ENCODE measurements at regions of chr12 and their contacts with region 1.

Region 1: GRCh38 chr12:117236456-117237001 is 46.3 kb upstream of the FBXO21 start:
- DNase-seq: peak; percentile 71 to 80
- ATAC-seq: peak in 5 of 8 donors; percentile 38 to 72 (median 57)
- H3K4me3 ChIP-seq: no peak overlapping the region
- H3K27ac ChIP-seq: no peak overlapping the region
- H3K4me1 ChIP-seq: no peaks in the 10 kb centered on the region
- H3K27me3 ChIP-seq: peaks cover 0 to 54% (median 31%) of the 10 kb centered on the region in 7 donors
- CTCF ChIP-seq: peak; percentile 70 to 84 (median 76)

Region 2: DNA sequence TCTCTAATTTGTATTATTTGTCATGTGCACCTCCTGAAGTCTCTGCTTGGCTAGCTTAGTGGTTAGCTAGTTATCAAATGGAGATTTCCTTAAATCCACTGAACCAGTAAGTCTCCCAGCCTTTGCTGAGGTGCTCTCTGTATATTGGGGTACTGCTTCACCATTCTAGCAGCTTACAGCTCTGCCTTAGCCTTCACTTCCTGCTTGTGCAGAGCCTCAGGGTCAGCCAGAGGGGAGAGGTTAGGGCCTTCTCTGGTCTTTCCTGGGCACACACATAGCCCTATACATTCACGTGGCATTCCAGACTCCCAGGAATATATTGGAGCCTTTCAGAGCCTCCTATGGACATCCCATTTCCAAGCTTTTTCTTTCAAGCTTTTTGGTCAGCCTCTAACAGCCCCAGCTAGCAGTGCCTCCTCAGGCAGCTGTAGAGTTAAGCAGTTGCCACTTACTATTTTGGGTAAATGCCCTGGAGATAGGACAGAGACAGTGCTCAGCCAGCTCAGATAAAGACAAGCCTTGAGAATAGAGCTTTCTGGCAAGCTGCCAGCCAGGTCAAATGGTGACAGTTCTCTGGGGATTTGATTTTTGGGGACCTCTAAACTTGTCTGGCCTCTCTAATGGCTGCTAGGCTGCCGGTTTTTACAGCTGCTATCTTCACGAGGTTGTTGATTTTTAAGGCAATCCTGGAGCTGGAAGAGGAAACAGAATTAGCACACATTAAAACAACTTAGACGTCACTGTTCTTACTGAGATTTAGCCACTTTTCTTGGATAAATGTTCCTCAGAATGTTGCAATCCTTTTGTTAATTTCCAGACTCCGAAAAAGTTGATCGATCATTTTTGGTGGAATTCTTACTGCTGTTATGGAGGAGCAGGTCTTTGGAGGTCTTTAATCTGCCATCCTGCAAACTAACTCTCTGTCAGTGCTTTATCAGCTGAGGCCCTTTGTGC is 292.8 kb before region 1 on chr12:
- intact Hi-C with region 1: no loop called
- DNase-seq: peak; percentile 32 to 35
- ATAC-seq: peak in 5 of 8 donors; percentile 22 to 71 (median 40)
- H3K4me3 ChIP-seq: no peak overlapping the region
- H3K27ac ChIP-seq: no peak overlapping the region
- H3K4me1 ChIP-seq: peaks cover 0 to 36% (median 16%) of the 10 kb centered on the region in 9 donors
- H3K27me3 ChIP-seq: no peaks in the 10 kb centered on the region
- CTCF ChIP-seq: no peak

Region 3: DNA sequence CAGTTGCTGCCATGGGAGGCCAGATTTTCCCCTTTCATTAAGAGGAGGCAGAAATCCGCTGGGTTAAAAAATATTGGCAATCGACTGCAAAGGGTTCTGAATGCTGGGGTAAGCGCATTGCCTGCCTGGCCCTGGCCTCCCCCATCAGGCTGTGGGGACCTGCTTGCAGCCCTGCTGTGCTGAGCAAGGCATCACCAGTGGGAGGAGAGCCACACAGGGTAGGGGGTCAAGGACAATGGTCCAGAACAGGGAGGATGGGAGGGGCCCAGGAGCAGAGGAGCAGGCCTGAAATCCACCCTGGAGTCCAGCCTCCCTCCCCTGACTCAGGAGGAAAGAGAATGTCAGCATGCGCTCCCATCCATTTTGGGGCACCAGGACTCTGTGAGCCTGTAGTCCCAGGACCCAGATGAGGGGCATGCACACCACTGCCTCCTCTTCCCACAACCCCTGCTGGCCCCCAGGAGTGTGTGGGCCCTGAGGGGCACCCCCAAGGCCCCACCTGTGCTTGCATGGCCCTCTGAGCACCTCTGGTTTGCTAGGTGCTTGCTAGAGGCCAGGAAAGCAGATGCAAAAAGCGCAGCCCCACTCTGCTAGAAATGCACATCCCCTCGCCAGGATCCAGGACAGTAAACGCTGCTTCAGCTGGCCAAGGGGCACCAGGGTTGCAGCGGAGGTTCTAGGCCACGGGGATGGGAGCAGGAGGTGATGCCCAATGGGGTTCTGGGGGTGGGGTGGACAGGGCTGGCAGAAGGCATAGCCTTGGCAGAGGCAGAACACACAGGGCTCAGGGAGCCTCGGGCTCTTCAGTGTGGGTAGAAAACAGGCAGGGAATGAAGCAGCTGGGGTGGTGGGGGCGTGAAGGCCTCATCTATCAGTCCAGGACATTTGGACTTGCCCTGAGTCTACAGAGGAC is 151.9 kb before region 1 on chr12:
- intact Hi-C with region 1: no loop called
- DNase-seq: no peak
- ATAC-seq: peak in 7 of 8 donors; percentile 11 to 53 (median 30)
- H3K4me3 ChIP-seq: no peak overlapping the region
- H3K27ac ChIP-seq: peak overlapping the region in 8 of 10 donors; percentile 25 to 75 (median 66)
- H3K4me1 ChIP-seq: peaks cover 0 to 60% (median 18%) of the 10 kb centered on the region in 9 donors
- H3K27me3 ChIP-seq: no peaks in the 10 kb centered on the region
- CTCF ChIP-seq: no peak

Region 4: GRCh38 chr12:117356048-117356447 is 119.5 kb after region 1 on chr12:
- intact Hi-C with region 1: loop called in 3 of 10 experiments (anchors 5 to 10 kb)
- DNase-seq: no peak
- ATAC-seq: no peak
- H3K4me3 ChIP-seq: no peak overlapping the region
- H3K27ac ChIP-seq: no peak overlapping the region
- H3K4me1 ChIP-seq: peaks cover 0 to 7% (median 0%) of the 10 kb centered on the region in 9 donors
- H3K27me3 ChIP-seq: peaks cover 7 to 70% (median 49%) of the 10 kb centered on the region in 7 donors
- CTCF ChIP-seq: no peak

Region 5: DNA sequence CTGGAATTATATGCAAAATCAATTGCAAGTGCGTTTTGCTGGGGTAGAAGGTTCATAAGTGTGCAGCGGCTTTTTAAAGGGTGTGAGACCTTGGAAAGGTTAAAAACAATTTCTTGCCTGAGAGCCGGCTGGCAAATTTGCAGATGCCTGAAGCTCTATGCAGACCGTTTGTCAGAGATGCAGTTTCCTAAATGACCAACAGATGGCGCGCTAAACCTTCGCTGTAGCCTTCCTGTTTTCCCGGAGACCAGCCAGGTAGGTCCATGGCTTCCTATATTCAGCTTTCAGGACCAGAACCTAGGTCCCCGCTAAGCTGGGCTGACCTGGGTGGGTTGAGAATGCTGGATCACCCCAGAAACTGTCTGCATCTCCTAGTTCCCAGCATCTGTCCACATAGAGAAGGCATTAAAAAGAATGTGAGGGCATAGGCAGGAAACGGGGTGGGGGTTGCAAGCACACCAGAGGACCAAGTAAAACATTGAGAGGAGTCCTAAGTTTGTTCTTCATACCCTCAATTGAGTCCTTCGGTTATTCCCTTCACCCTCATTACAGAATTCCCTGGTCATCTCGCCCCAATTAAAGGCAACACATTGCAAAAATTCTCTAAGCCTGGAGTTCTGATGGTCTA is 130.6 kb after region 1 on chr12:
- intact Hi-C with region 1: loop called in 4 of 10 experiments (anchors 2 to 10 kb)
- DNase-seq: peak in 1 of 2 donors; percentile 66
- ATAC-seq: peak in 6 of 8 donors; percentile 36 to 73 (median 55)
- H3K4me3 ChIP-seq: no peak overlapping the region
- H3K27ac ChIP-seq: no peak overlapping the region
- H3K4me1 ChIP-seq: no peaks in the 10 kb centered on the region
- H3K27me3 ChIP-seq: peaks cover 0 to 58% (median 42%) of the 10 kb centered on the region in 7 donors
- CTCF ChIP-seq: peak; percentile 77 to 93 (median 87)

Region 6: GRCh38 chr12:117580718-117581062 is 344.2 kb after region 1 on chr12:
- intact Hi-C with region 1: loop called in 7 of 10 experiments (anchors 5 to 10 kb)
- DNase-seq: peak; percentile 11 to 50
- ATAC-seq: peak; percentile 38 to 82 (median 70)
- H3K4me3 ChIP-seq: no peak overlapping the region
- H3K27ac ChIP-seq: no peak overlapping the region
- H3K4me1 ChIP-seq: peaks cover 0 to 9% (median 0%) of the 10 kb centered on the region in 9 donors
- H3K27me3 ChIP-seq: peaks cover 0 to 37% (median 27%) of the 10 kb centered on the region in 7 donors
- CTCF ChIP-seq: no peak

Region 7: GRCh38 chr12:117587631-117588287 is 351.2 kb after region 1 on chr12:
- intact Hi-C with region 1: loop called in 8 of 10 experiments (anchors 1 to 10 kb)
- DNase-seq: peak; percentile 18 to 36
- ATAC-seq: peak in 5 of 8 donors; percentile 38 to 73 (median 67)
- H3K4me3 ChIP-seq: no peak overlapping the region
- H3K27ac ChIP-seq: no peak overlapping the region
- H3K4me1 ChIP-seq: no peaks in the 10 kb centered on the region
- H3K27me3 ChIP-seq: peaks cover 0 to 54% (median 37%) of the 10 kb centered on the region in 7 donors
- CTCF ChIP-seq: peak; percentile 62 to 88 (median 81)

Region 8: GRCh38 chr12:117671734-117672133 is 435.2 kb after region 1 on chr12:
- intact Hi-C with region 1: loop called in 1 of 10 experiments (anchors 10 kb)
- DNase-seq: no peak
- ATAC-seq: no peak
- H3K4me3 ChIP-seq: no peak overlapping the region
- H3K27ac ChIP-seq: no peak overlapping the region
- H3K4me1 ChIP-seq: no peaks in the 10 kb centered on the region
- H3K27me3 ChIP-seq: peaks cover 0 to 32% (median 17%) of the 10 kb centered on the region in 7 donors
- CTCF ChIP-seq: peak in 7 of 9 donors; percentile 29 to 51 (median 41)

Region 9: DNA sequence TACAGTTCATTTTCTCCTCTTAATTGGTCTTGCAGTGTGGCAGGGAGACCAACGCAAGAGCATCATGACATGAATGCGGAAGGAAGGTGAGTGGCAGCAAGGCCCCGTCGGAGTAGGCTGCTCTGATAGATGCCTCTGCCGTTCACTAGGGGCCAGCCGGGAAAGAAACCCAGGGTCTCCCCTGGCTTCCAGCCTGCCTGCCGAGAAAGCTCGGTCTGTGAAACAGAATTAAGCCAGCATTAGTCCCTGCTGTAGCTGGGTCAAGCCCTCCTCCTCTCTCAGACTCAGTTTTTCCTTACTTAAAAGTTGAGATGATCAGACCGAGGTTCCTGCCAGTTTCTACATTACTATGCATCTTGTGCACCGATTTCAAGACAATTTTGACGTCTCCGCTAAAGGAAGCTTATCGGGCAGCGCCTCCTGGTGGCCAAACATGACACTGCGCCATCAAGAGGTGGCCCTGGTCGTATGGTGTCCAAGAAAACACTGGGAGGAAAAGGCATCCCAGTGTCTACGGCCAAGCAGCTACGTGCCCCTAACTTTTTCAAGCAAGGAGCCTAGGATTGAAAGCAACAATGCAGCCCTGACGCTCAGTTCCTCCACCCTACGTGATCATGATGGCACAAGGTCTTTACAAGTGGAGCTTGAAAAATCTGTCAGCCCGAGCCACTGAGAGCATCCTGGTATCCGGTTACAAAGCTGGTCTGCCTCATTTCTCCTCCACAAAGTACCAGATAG is 600.6 kb after region 1 on chr12:
- intact Hi-C with region 1: loop called in 8 of 10 experiments (anchors 1 to 5 kb)
- DNase-seq: peak; percentile 56 to 75
- ATAC-seq: peak; percentile 29 to 73 (median 59)
- H3K4me3 ChIP-seq: no peak overlapping the region
- H3K27ac ChIP-seq: no peak overlapping the region
- H3K4me1 ChIP-seq: peaks cover 0 to 3% (median 0%) of the 10 kb centered on the region in 9 donors
- H3K27me3 ChIP-seq: peaks cover 0 to 83% (median 56%) of the 10 kb centered on the region in 7 donors
- CTCF ChIP-seq: peak; percentile 84 to 97 (median 94)